Activated CD4-positive, alpha-beta T cell treated with anti-CD3 and anti-CD28 coated beads for 36 hours (primary cell): ENCODE measurements at regions of chr21 and their contacts with region 1.

Region 1: GRCh38 chr21:41879190-41879998 is at the start of gene PRDM15:
- DNase-seq: peak; percentile 92
- ATAC-seq: peak; percentile 79
- H3K4me3 Mint-ChIP-seq: peak within 1 kb of the TSS; percentile 79
- H3K27ac Mint-ChIP-seq: peak within 1 kb of the TSS; percentile 97
- H3K4me1 Mint-ChIP-seq: peaks cover 18% of the 10 kb centered on the region
- H3K27me3 Mint-ChIP-seq: no peaks in the 10 kb centered on the region
- total RNA-seq, gene PRDM15: 11.8 to 13.0 TPM

Region 2: GRCh38 chr21:41425954-41426675 is 453.3 kb before region 1 on chr21 and contains the start of gene MX1:
- CTCF ChIA-PET with region 1: no interaction called
- POLR2A ChIA-PET with region 1: no interaction called
- intact Hi-C with region 1: loop called in 1 of 2 experiments (anchors 1 kb)
- DNase-seq: peak; percentile 96
- ATAC-seq: peak; percentile 94
- H3K4me3 Mint-ChIP-seq: peak within 1 kb of the TSS; percentile 93
- H3K27ac Mint-ChIP-seq: peak within 1 kb of the TSS; percentile 98
- H3K4me1 Mint-ChIP-seq: peaks cover 54% of the 10 kb centered on the region
- H3K27me3 Mint-ChIP-seq: no peaks in the 10 kb centered on the region
- total RNA-seq, gene MX1: 162 to 169 TPM

Region 3: GRCh38 chr21:41901099-41901498 is 21.7 kb after region 1 on chr21:
- CTCF ChIA-PET with region 1: interaction called, 5 read pairs
- POLR2A ChIA-PET with region 1: interaction called, 4 read pairs
- intact Hi-C with region 1: loop called in 1 of 2 experiments (anchors 1 kb)
- DNase-seq: peak; percentile 79
- ATAC-seq: peak; percentile 74
- H3K4me3 Mint-ChIP-seq: peak overlapping the region; percentile 32
- H3K27ac Mint-ChIP-seq: peak overlapping the region; percentile 95
- H3K4me1 Mint-ChIP-seq: peaks cover 35% of the 10 kb centered on the region
- H3K27me3 Mint-ChIP-seq: no peaks in the 10 kb centered on the region

Region 4: GRCh38 chr21:42062236-42063022 is 183.0 kb after region 1 on chr21:
- CTCF ChIA-PET with region 1: no interaction called
- POLR2A ChIA-PET with region 1: no interaction called
- intact Hi-C with region 1: loop called (anchors 1 to 5 kb)
- DNase-seq: peak; percentile 86
- ATAC-seq: peak; percentile 65
- H3K4me3 Mint-ChIP-seq: peak overlapping the region; percentile 60
- H3K27ac Mint-ChIP-seq: peak overlapping the region; percentile 86
- H3K4me1 Mint-ChIP-seq: peaks cover 43% of the 10 kb centered on the region
- H3K27me3 Mint-ChIP-seq: no peaks in the 10 kb centered on the region

Region 5: DNA sequence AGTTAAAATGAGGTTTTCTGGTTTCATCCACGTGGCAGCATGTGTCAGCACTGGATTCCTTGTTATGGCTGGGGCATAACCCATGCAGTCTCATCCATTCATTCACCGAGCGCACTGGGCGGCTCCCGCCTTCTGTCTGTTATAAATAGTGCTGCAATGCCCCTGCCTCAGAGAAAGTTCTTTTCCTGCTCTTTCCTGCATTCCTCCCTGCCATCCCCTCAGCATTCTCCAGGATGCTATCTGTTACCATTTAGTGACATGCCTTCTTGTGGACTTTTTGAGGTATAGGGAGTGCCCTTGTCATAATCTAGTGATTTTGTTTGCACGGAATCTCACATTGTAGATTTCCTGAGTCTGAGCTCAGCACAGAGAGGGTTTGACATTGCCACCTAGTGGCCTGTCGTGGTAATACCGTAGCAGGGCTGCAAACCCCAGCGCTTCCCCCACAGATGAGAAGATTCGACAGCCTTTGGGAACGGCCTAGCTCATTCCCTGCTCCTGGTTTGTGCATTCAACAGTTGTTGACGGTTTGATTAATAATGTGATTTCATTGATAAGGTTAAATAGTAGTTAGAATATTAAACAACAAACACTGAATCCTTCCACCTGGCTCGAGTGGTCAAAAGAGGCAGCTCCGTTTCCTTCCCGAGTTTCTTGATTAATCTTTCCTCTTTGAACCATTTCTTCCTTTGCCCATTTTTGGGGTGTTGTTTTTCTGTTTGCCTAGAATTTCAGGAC is 238.0 kb after region 1 on chr21:
- CTCF ChIA-PET with region 1: interaction called, 9 read pairs
- POLR2A ChIA-PET with region 1: interaction called, 3 read pairs
- intact Hi-C with region 1: loop called in 1 of 2 experiments (anchors 5 kb)
- DNase-seq: peak; percentile 86
- ATAC-seq: peak; percentile 88
- H3K4me3 Mint-ChIP-seq: no peak overlapping the region
- H3K27ac Mint-ChIP-seq: no peak overlapping the region
- H3K4me1 Mint-ChIP-seq: peaks cover 10% of the 10 kb centered on the region
- H3K27me3 Mint-ChIP-seq: peaks cover 43% of the 10 kb centered on the region

Region 6: GRCh38 chr21:42561762-42562650 is 682.6 kb after region 1 on chr21:
- CTCF ChIA-PET with region 1: no interaction called
- POLR2A ChIA-PET with region 1: no interaction called
- intact Hi-C with region 1: no loop called
- DNase-seq: peak; percentile 18
- ATAC-seq: peak; percentile 55
- H3K4me3 Mint-ChIP-seq: no peak overlapping the region
- H3K27ac Mint-ChIP-seq: peak overlapping the region; percentile 42
- H3K4me1 Mint-ChIP-seq: no peaks in the 10 kb centered on the region
- H3K27me3 Mint-ChIP-seq: no peaks in the 10 kb centered on the region